B cell (primary cell): ENCODE measurements at regions of chr14 and their contacts with region 1.

Region 1: DNA sequence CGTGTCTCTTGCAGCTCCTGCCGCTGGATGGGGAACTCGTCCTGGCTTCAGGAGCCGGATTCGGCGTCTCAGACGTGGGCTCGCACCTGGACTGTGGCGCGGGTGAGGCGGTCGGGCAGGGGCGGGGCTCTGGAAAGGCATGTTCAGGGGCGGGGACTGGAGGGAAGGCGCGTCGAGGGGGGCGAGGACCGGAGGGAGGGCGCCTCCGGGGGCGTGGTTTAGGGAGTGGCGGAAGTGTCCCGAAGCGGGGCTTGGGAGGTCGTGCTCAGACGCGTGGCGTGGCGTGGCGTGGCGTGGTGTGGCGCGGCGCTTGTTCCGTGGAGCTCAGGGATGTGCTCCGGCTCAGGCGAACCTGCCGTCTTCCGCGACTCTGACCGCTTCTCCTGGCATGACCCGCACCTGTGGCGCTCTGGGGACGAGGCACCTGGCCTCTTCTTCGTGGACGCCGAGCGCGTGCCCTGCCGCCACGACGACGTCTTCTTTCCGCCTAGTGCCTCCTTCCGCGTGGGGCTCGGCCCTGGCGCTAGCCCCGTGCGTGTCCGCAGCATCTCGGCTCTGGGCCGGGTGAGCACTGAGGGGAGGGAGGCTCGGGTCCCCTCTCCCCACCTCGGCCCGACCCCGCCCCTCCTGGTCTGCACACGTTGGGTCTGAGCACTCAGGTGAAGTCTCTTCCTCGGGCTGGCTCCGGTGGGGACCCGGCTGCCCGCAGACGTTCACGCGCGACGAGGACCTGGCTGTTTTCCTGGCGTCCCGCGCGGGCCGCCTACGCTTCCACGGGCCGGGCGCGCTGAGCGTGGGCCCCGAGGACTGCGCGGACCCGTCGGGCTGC is 6.2 kb downstream of the AMN start:
- DNase-seq: peak; percentile 89
- ATAC-seq: peak; percentile 90
- H3K4me3 ChIP-seq: peak overlapping the region in 4 of 5 experiments; percentile 48 to 77 (median 60)
- H3K4me3 Mint-ChIP-seq: peak overlapping the region; percentile 87
- H3K27ac ChIP-seq: no peak overlapping the region
- H3K27ac Mint-ChIP-seq: peak overlapping the region; percentile 50
- H3K4me1 ChIP-seq: peaks cover 39 to 45% of the 10 kb centered on the region in 2 donors
- H3K4me1 Mint-ChIP-seq: peaks cover 35% of the 10 kb centered on the region
- H3K27me3 ChIP-seq: peaks cover 0 to 49% (median 11%) of the 10 kb centered on the region in 4 experiments
- H3K27me3 Mint-ChIP-seq: peaks cover 14% of the 10 kb centered on the region
- CTCF ChIP-seq: no peak

Region 2: DNA sequence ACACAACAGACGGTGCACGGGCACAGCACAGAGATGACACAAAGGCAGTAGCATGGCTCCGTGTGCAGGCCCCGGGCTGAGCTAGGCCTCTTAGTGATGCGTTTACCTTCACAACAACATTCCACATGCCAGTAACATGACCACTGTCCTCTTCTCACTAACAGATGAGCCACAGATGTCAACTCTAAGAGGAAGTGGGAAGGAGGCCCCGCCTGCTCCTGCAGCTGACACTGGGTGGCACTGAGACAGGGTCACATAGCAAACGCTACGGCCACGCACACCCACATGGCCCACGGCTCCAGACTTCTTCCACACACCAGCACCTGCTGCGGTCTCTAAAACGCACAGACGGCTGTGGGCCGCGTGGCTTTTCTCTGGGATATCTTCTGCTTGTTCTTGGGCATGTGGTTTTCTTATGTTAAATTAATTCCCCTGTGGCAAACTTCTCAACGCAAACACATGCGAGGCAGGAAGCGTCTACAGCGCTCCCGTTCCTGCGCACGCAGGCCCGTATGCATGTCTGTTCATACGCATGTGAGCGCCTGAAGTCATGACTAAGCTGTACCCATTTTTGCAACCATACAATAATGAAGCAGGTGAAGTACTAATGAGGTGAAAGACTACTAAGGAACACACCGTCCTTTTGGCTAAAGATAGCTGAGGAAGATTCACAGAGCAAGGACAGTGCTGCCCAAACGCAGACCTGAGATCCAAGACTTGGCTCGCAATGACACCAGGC is 20.6 kb after region 1 on chr14:
- CTCF ChIA-PET with region 1: no interaction called
- POLR2A ChIA-PET with region 1: interaction called, 3 read pairs
- intact Hi-C with region 1: loop called (anchors 1 kb)
- DNase-seq: peak; percentile 87
- ATAC-seq: peak; percentile 86
- H3K4me3 ChIP-seq: peak overlapping the region in 3 of 5 experiments; percentile 8 to 22 (median 11)
- H3K4me3 Mint-ChIP-seq: peak overlapping the region; percentile 74
- H3K27ac ChIP-seq: peak overlapping the region; percentile 71 to 80
- H3K27ac Mint-ChIP-seq: peak overlapping the region; percentile 87
- H3K4me1 ChIP-seq: peaks cover 17 to 36% of the 10 kb centered on the region in 2 donors
- H3K4me1 Mint-ChIP-seq: peaks cover 32% of the 10 kb centered on the region
- H3K27me3 ChIP-seq: no peaks in the 10 kb centered on the region
- H3K27me3 Mint-ChIP-seq: no peaks in the 10 kb centered on the region
- CTCF ChIP-seq: no peak

Region 3: DNA sequence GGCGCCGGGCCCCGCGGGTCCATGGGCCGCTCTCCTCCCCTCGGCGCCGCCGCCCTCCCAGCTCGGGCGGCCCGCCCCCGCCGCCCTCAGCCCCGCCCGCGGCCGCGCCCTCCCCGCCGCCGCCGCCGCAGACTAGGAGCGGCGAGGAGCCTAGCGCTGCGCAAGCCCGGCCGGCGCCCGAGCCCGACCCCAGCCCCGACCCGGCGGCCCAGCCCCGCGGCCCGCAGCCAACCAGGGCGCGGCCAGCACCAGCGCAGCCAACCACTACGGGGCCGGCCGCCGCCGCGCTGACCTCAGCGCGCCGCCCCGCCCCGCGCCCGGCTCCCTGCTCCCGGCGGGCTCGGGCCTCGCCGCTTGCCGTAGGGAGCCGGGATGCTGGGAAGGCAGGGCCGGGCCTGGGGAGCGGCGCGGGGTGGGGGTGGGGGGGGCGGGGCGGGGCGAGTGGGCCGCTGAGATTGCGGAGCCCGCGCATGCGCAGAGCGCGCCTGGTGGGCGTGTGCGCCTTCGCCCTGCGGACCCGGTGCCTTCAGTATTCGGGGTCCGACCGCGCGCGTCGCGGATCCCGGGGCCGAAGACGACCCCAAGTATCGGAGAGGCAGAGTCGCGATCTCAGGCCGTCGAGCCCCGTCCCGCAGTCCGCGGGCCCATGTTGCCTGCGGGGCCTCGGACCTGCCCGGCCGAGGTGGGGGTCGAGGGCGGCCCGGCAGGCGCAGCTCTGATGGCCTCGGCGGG is 128.9 kb after region 1 on chr14 and contains the start of gene CDC42BPB:
- CTCF ChIA-PET with region 1: no interaction called
- POLR2A ChIA-PET with region 1: no interaction called
- intact Hi-C with region 1: loop called (anchors 10 kb)
- DNase-seq: peak; percentile 88
- ATAC-seq: peak; percentile 87
- H3K4me3 ChIP-seq: peak within 1 kb of the TSS; percentile 26 to 73 (median 67)
- H3K4me3 Mint-ChIP-seq: peak within 1 kb of the TSS; percentile 85
- H3K27ac ChIP-seq: no peak within 1 kb of the TSS
- H3K27ac Mint-ChIP-seq: peak within 1 kb of the TSS; percentile 71
- H3K4me1 ChIP-seq: peaks cover 16 to 19% of the 10 kb centered on the region in 2 donors
- H3K4me1 Mint-ChIP-seq: peaks cover 31% of the 10 kb centered on the region
- H3K27me3 ChIP-seq: peaks cover 0 to 7% (median 0%) of the 10 kb centered on the region in 4 experiments
- H3K27me3 Mint-ChIP-seq: no peaks in the 10 kb centered on the region
- CTCF ChIP-seq: no peak
- total RNA-seq, gene CDC42BPB: 52.5 and 59.2 TPM in 2 replicates